ENCODE measurements at regions of chr7 and their contacts with region 1.

Region 1: GRCh38 chr7:32762925-32763293 is 128.7 kb downstream of the KBTBD2 start:
- DNase-seq: no peak
- ATAC-seq: no peak
- H3K4me3 ChIP-seq: no peak overlapping the region
- H3K27ac ChIP-seq: no peak overlapping the region
- H3K4me1 ChIP-seq: no peaks in the 10 kb centered on the region; the same call in 1 of the 2 replicates
- H3K27me3 ChIP-seq: no peaks in the 10 kb centered on the region
- CTCF ChIP-seq: no peak
- POLR2A ChIP-seq: no peak
- RAD21 ChIP-seq: no peak

Region 2: DNA sequence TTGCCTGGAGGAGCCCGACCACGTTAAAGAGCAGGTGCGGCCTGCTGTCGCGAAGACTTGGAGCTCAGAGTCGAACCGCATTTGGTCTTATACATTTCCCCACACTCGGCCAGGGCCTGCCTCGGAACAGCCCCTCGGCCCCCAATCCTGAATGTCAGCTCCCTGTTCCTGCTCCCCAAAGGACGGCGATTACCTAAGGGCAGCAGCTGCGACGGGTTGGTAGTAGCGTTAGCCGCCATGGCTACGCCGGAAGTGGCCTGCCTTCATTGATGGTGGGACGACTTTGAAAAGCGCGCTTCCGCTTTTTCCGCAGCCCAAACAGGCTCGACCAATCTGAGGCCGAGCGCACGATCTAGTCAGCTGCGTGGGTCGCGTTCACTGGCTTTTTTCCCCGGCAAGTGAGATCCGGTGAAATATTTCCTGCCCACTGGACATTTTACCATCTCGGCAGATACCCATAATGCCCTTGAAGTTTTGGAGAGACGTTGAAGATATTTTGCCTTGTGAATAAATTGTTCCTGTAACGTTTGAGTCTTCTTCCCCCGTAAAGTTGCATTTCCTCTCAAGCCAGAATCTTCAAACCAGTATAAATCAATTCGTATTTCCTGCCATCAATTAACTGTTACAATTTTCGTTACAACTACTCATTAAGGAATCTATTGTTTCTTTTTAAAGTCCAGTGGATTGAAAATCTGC is 272.6 kb before region 1 on chr7 and contains the start of gene LSM5:
- CTCF ChIA-PET with region 1: no interaction called
- POLR2A ChIA-PET with region 1: no interaction called
- dilution Hi-C with region 1: no loop called
- in situ Hi-C with region 1: no loop called
- intact Hi-C with region 1: loop called (anchors 1 kb)
- DNase-seq: peak; percentile 95
- ATAC-seq: peak; percentile 81
- H3K4me3 ChIP-seq: peak within 1 kb of the TSS; percentile 82
- H3K27ac ChIP-seq: peak within 1 kb of the TSS; percentile 88
- H3K4me1 ChIP-seq: peaks cover 4% of the 10 kb centered on the region; the same call in 1 of the 2 replicates
- H3K27me3 ChIP-seq: no peaks in the 10 kb centered on the region
- CTCF ChIP-seq: no peak
- POLR2A ChIP-seq: peak; percentile 48; the same call in 1 of the 2 replicates
- RAD21 ChIP-seq: no peak
- total RNA-seq, gene LSM5: 5.0 and 36.4 TPM in 2 replicates

Region 3: DNA sequence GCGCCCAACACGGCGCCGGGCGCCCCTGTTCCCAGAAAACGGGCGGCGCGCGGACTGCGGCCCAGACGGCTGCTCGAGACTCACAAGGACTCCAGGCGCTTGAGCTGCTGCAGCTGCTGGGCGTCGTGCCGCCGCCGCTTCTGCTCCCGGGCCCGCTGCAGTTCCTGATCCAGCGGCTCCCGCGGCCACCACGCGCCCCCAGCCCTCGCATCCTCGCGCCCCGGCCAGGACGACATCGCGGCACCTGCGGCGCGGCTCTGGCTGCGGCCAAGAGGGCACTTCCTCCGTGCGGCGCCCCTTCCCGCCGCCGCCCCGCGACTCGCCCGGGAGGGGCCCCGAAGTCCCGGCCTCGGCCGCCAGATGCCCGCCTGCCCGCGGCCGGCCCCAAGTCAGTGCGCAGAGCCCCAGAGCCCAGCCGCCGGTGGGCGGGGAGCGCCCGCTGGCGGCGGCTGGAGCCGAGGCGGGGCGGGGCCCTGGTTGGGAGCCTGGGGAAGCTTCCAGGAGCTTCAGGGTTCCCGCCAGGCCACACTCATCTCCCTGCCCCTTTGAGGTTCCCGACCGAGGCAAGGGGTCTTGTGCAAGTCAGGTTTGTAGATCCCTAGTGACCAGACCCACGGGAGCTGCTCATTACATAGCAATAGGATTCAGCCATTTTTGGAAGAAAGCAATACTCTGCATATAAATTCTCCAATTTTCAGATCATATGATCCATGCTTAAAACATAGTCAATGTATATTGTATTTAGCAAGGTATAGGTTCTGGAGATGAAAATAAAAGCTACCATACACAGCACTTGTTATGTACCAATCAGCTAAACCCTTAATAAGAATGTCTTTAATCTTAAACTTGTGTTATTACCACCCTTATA is 180.1 kb after region 1 on chr7:
- CTCF ChIA-PET with region 1: no interaction called
- POLR2A ChIA-PET with region 1: no interaction called
- dilution Hi-C with region 1: no loop called
- in situ Hi-C with region 1: no loop called
- intact Hi-C with region 1: loop called (anchors 5 kb)
- DNase-seq: peak; percentile 71
- ATAC-seq: peak; percentile 97
- H3K4me3 ChIP-seq: peak overlapping the region; percentile 94
- H3K27ac ChIP-seq: peak overlapping the region; percentile 95
- H3K4me1 ChIP-seq: peaks cover under 1% of the 10 kb centered on the region; the same call in 1 of the 2 replicates
- H3K27me3 ChIP-seq: no peaks in the 10 kb centered on the region
- CTCF ChIP-seq: peak; percentile 70
- POLR2A ChIP-seq: no peak; the same call in 1 of the 2 replicates
- RAD21 ChIP-seq: peak; percentile 69

Region 4: GRCh38 chr7:33050535-33051318 is 287.8 kb after region 1 on chr7:
- CTCF ChIA-PET with region 1: no interaction called
- POLR2A ChIA-PET with region 1: no interaction called
- dilution Hi-C with region 1: no loop called
- in situ Hi-C with region 1: no loop called
- intact Hi-C with region 1: loop called (anchors 2 kb)
- DNase-seq: peak; percentile 59
- ATAC-seq: peak; percentile 61
- H3K4me3 ChIP-seq: no peak overlapping the region
- H3K27ac ChIP-seq: no peak overlapping the region
- H3K4me1 ChIP-seq: peaks cover 3% of the 10 kb centered on the region
- H3K27me3 ChIP-seq: no peaks in the 10 kb centered on the region
- CTCF ChIP-seq: peak; percentile 68
- POLR2A ChIP-seq: no peak
- RAD21 ChIP-seq: peak; percentile 78

Region 5: DNA sequence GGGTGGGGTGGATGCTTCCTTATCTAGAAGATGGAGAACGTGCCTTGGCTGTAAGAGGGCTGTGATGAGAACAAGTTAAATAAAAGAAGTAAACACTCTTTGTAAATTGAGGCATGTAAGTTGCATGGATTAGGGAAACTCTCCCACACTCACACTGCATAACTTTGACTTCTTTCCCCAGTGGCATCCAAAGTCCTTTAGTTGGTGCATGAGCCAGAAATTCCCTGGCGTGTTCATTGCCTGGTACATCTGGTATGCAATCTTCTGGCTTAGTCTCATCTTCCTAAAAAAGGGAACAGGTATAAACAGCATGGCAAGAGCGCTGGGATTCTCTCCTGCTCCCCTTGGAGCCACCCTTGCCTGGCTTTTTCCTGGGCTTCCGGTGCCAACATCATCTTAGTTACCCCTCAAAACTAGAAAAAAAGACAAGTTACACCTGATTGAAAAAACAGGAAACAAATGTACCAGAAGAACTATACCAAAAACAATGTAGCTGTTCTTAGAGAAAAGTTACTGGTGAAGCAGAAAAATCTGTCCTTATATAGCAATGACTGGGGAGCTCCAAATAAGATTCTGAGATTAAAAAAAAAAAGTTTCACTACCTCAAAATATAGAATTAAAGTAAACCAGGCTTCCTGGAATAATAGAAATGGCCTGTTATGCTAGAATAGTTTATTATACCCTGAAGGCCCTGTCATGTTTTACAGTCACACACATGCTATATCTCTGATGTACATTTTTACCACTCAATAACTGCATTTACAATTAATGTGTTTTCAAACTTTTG is 336.4 kb after region 1 on chr7:
- CTCF ChIA-PET with region 1: no interaction called
- POLR2A ChIA-PET with region 1: no interaction called
- dilution Hi-C with region 1: no loop called
- in situ Hi-C with region 1: loop called (anchors 5 kb)
- intact Hi-C with region 1: no loop called
- DNase-seq: no peak
- ATAC-seq: no peak
- H3K4me3 ChIP-seq: no peak overlapping the region
- H3K27ac ChIP-seq: no peak overlapping the region
- H3K4me1 ChIP-seq: no peaks in the 10 kb centered on the region
- H3K27me3 ChIP-seq: no peaks in the 10 kb centered on the region
- CTCF ChIP-seq: no peak
- POLR2A ChIP-seq: no peak
- RAD21 ChIP-seq: no peak

Region 6: GRCh38 chr7:33237036-33237435 is 474.1 kb after region 1 on chr7:
- CTCF ChIA-PET with region 1: no interaction called
- POLR2A ChIA-PET with region 1: no interaction called
- dilution Hi-C with region 1: no loop called
- in situ Hi-C with region 1: no loop called
- intact Hi-C with region 1: loop called (anchors 5 kb)
- DNase-seq: peak; percentile 6
- ATAC-seq: peak; percentile 35; the same call in 1 of the 2 replicates
- H3K4me3 ChIP-seq: no peak overlapping the region
- H3K27ac ChIP-seq: no peak overlapping the region
- H3K4me1 ChIP-seq: no peaks in the 10 kb centered on the region
- H3K27me3 ChIP-seq: no peaks in the 10 kb centered on the region
- CTCF ChIP-seq: no peak
- POLR2A ChIP-seq: no peak
- RAD21 ChIP-seq: no peak